ENCODE measurements at regions of chr12 and their contacts with region 1.

Region 1: DNA sequence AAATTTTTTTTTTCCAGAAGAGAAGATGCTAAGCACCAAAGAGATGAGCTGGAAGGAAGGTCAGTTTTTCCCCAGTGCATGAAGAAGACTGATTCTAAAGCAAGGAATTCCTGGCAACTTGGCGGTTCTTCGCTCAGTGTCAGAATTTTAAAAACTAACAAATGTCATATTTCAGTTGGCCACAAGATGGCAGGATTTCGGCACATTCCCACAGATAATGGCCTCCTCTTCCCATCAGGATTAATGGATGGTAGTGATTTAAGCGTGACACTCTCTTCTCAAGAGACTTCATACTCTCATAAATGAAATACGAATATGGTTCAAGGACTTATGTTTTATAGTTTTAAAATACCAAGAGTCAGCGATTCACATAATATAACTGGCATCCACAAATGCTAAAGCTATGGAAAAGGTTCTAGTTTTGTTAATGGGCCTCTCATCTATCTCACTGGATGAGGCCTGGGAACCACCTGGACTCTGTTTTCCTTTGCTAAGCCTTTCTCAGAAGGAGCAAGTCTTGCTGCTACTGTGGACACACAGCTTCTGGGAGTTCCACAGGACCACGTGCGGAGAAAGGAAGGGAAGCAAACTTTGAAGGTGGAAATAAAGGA is 46.1 kb upstream of the PTPRO start:
- DNase-seq: peak; percentile 46 to 48
- ATAC-seq: peak; percentile 65 to 91; a peak in 5 of 6 replicates
- H3K4me3 ChIP-seq: no peak overlapping the region
- H3K27ac ChIP-seq: no peak overlapping the region; a peak in 1 of 6 replicates
- H3K4me1 ChIP-seq: peaks cover 15% of the 10 kb centered on the region; the same call in 2 of the 3 replicates
- CTCF ChIP-seq: peak; percentile 76
- EP300 ChIP-seq: no peak
- POLR2A ChIP-seq: no peak
- RAD21 ChIP-seq: peak; percentile 73 to 84

Region 2: DNA sequence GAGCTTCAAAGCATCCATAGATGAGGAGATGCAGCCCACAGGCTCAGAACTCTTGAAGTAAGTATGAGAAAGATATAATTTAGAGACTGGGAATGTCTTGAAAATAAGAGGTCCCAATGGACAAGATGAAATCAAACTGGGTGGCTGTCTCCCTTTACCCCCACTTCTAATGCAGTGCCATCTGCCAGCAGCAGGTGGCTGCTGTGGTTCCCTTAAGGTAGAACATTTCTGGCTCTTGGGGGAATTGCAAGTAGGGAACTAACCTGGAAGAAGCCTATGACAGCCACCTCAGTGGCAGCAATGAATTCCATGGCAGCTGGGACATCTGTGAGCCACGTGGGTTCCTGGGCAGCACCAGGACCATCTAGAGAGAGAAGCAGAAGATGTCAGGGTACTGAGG is 338.5 kb before region 1 on chr12:
- CTCF ChIA-PET with region 1: no interaction called
- POLR2A ChIA-PET with region 1: no interaction called
- DNase-seq: no peak
- ATAC-seq: peak in 1 of 2 experiments; percentile 74; a peak in 3 of 6 replicates
- H3K4me3 ChIP-seq: no peak overlapping the region
- H3K27ac ChIP-seq: no peak overlapping the region
- H3K4me1 ChIP-seq: no peaks in the 10 kb centered on the region
- CTCF ChIP-seq: no peak
- EP300 ChIP-seq: no peak
- POLR2A ChIP-seq: no peak
- RAD21 ChIP-seq: no peak

Region 3: GRCh38 chr12:15165012-15165659 is 111.1 kb before region 1 on chr12:
- CTCF ChIA-PET with region 1: no interaction called
- POLR2A ChIA-PET with region 1: no interaction called
- DNase-seq: peak in 1 of 2 experiments; percentile 4
- ATAC-seq: peak; percentile 33 to 51; a peak in 3 of 6 replicates
- H3K4me3 ChIP-seq: no peak overlapping the region
- H3K27ac ChIP-seq: peak overlapping the region; percentile 36 to 38; a peak in 4 of 6 replicates
- H3K4me1 ChIP-seq: peaks cover 38% of the 10 kb centered on the region
- CTCF ChIP-seq: no peak
- EP300 ChIP-seq: no peak
- POLR2A ChIP-seq: no peak
- RAD21 ChIP-seq: no peak

Region 4: GRCh38 chr12:15453613-15454012 is 177.4 kb after region 1 on chr12:
- CTCF ChIA-PET with region 1: no interaction called
- POLR2A ChIA-PET with region 1: no interaction called
- DNase-seq: no peak
- ATAC-seq: no peak
- H3K4me3 ChIP-seq: no peak overlapping the region
- H3K27ac ChIP-seq: no peak overlapping the region
- H3K4me1 ChIP-seq: no peaks in the 10 kb centered on the region
- CTCF ChIP-seq: no peak
- EP300 ChIP-seq: no peak
- POLR2A ChIP-seq: no peak
- RAD21 ChIP-seq: no peak

Region 5: DNA sequence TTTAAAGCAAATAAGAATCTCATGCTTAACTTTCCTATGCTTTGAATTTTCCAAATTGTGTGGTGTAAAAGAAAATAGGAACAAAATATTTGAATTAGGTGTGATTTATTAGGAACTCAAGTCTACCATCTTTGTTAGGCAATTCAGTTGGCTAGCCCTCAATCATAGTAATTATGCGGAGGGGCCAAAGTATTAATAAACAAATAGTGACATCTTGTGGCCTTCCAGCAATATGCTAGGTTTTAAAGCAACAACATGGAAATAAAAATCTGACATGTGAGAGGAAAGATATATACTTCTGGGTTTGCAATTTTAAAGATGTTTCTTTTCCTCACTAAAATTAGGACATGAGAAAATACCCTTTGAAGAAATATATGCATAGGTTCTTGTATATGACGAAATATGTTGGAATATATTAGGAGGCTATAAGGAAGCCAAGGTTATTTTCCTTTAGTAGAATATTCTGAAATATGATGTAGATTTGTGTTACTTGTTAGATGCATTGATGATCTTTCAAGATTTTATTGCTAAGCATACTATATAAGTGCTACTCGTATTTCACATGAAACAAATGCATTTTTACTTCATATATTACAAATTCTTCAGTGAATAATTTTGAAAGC is 246.5 kb after region 1 on chr12:
- CTCF ChIA-PET with region 1: interaction called, 55 read pairs
- POLR2A ChIA-PET with region 1: no interaction called
- DNase-seq: peak; percentile 21 to 54
- ATAC-seq: peak; percentile 57 to 66; a peak in 3 of 6 replicates
- H3K4me3 ChIP-seq: no peak overlapping the region
- H3K27ac ChIP-seq: no peak overlapping the region
- H3K4me1 ChIP-seq: peaks cover 5% of the 10 kb centered on the region; the same call in 2 of the 3 replicates
- CTCF ChIP-seq: peak; percentile 89
- EP300 ChIP-seq: no peak
- POLR2A ChIP-seq: no peak
- RAD21 ChIP-seq: peak; percentile 90 to 91